ENCODE measurements at regions of chr10 and their contacts with region 1.

Region 1: DNA sequence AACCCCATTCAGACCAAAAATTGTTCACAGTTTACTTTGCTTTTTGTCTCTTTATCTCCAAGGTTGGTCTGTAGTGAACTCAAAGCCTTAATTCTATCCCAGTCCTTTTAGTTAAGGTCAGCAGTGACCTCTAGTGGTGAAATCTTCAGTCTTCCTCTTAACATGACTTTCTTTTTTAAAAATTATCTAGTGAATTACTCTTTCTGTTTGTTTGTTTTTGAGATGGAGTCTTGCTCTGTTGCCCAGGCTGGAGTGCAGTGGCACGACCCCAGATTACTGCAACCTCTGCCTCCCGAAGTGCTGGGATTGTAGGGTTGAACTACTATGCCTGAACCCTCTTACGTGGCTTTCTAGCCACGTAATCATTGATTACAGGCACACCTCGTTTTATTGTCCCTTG is 25.0 kb downstream of the ZNF487 start:
- DNase-seq: peak in 7 of 9 donors; percentile 62 to 79 (median 70)
- ATAC-seq: peak; percentile 92
- H3K4me3 ChIP-seq: no peak overlapping the region
- H3K4me3 Mint-ChIP-seq: peak overlapping the region in 1 of 10 donors; percentile 20
- H3K27ac ChIP-seq: no peak overlapping the region
- H3K27ac Mint-ChIP-seq: peak overlapping the region in 6 of 9 donors; percentile 2 to 67 (median 40)
- H3K4me1 ChIP-seq: peaks cover 1 to 7% of the 10 kb centered on the region in 2 donors
- H3K4me1 Mint-ChIP-seq: peaks cover 4 to 22% (median 19%) of the 10 kb centered on the region in 7 donors
- H3K27me3 ChIP-seq: no peaks in the 10 kb centered on the region
- H3K27me3 Mint-ChIP-seq: no peaks in the 10 kb centered on the region

Region 2: GRCh38 chr10:43105102-43105785 is 356.7 kb before region 1 on chr10:
- CTCF ChIA-PET with region 1: no interaction called
- POLR2A ChIA-PET with region 1: no interaction called
- intact Hi-C with region 1: loop called in 1 of 2 experiments (anchors 2 kb)
- DNase-seq: peak; percentile 48 to 91 (median 75)
- ATAC-seq: peak; percentile 95
- H3K4me3 ChIP-seq: peak overlapping the region; percentile 60
- H3K4me3 Mint-ChIP-seq: peak overlapping the region; percentile 61 to 85 (median 76)
- H3K27ac ChIP-seq: no peak overlapping the region
- H3K27ac Mint-ChIP-seq: peak overlapping the region in 1 of 9 donors; percentile 49
- H3K4me1 ChIP-seq: peaks cover 0 to 8% of the 10 kb centered on the region in 2 donors
- H3K4me1 Mint-ChIP-seq: peaks cover 0 to 15% (median 7%) of the 10 kb centered on the region in 7 donors
- H3K27me3 ChIP-seq: no peaks in the 10 kb centered on the region
- H3K27me3 Mint-ChIP-seq: peaks cover 15 to 26% (median 26%) of the 10 kb centered on the region in 5 donors

Region 3: GRCh38 chr10:43265799-43266721 is 195.9 kb before region 1 on chr10:
- CTCF ChIA-PET with region 1: interaction called, 3 read pairs
- POLR2A ChIA-PET with region 1: no interaction called
- intact Hi-C with region 1: loop called (anchors 1 to 10 kb)
- DNase-seq: peak in 2 of 9 donors; percentile 21 to 31
- ATAC-seq: peak; percentile 56
- H3K4me3 ChIP-seq: peak overlapping the region; percentile 53
- H3K4me3 Mint-ChIP-seq: peak overlapping the region; percentile 65 to 84 (median 74)
- H3K27ac ChIP-seq: no peak overlapping the region
- H3K27ac Mint-ChIP-seq: peak overlapping the region in 1 of 9 donors; percentile 52
- H3K4me1 ChIP-seq: peaks cover 0 to 4% of the 10 kb centered on the region in 2 donors
- H3K4me1 Mint-ChIP-seq: peaks cover 0 to 12% (median 4%) of the 10 kb centered on the region in 7 donors
- H3K27me3 ChIP-seq: peaks cover 0 to 11% of the 10 kb centered on the region in 2 donors
- H3K27me3 Mint-ChIP-seq: peaks cover 46 to 59% (median 54%) of the 10 kb centered on the region in 5 donors

Region 4: GRCh38 chr10:43292755-43293676 is 168.9 kb before region 1 on chr10:
- CTCF ChIA-PET with region 1: interaction called, 6 read pairs
- POLR2A ChIA-PET with region 1: interaction called, 3 read pairs
- intact Hi-C with region 1: loop called (anchors 1 kb)
- DNase-seq: peak in 6 of 9 donors; percentile 22 to 51 (median 44)
- ATAC-seq: peak; percentile 72
- H3K4me3 ChIP-seq: no peak overlapping the region
- H3K4me3 Mint-ChIP-seq: peak overlapping the region; percentile 13 to 75 (median 55)
- H3K27ac ChIP-seq: no peak overlapping the region
- H3K27ac Mint-ChIP-seq: peak overlapping the region in 6 of 9 donors; percentile 65 to 84 (median 78)
- H3K4me1 ChIP-seq: peaks cover 31 to 35% of the 10 kb centered on the region in 2 donors
- H3K4me1 Mint-ChIP-seq: peaks cover 16 to 83% (median 34%) of the 10 kb centered on the region in 7 donors
- H3K27me3 ChIP-seq: no peaks in the 10 kb centered on the region
- H3K27me3 Mint-ChIP-seq: peaks cover 0 to 15% (median 6%) of the 10 kb centered on the region in 5 donors

Region 5: DNA sequence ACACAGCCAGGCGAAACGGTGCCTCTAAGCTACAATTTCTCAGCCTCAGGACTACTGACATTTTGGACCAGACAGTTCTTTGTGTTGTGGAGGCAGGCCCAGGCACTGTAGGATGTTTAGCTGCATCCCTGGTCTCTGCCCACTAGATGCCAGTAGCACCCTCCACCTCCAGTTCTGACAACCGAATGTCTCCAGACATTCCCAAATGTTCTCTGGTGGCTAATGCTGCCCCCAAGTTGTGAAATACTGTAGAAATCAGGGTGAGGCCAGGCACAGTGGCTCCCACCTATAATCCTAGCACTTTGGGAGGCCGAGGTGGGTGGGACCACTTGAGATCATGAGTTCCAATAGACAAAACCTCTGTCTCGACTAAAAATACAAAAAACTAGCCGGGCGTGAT is 71.2 kb before region 1 on chr10:
- CTCF ChIA-PET with region 1: interaction called, 6 read pairs
- POLR2A ChIA-PET with region 1: interaction called, 4 read pairs
- intact Hi-C with region 1: loop called (anchors 1 to 2 kb)
- DNase-seq: peak in 5 of 9 donors; percentile 17 to 36 (median 23)
- ATAC-seq: peak; percentile 67
- H3K4me3 ChIP-seq: no peak overlapping the region
- H3K4me3 Mint-ChIP-seq: peak overlapping the region in 1 of 10 donors; percentile 8
- H3K27ac ChIP-seq: peak overlapping the region; percentile 55
- H3K27ac Mint-ChIP-seq: peak overlapping the region in 8 of 9 donors; percentile 34 to 86 (median 69)
- H3K4me1 ChIP-seq: peaks cover 29 to 51% of the 10 kb centered on the region in 2 donors
- H3K4me1 Mint-ChIP-seq: peaks cover 46 to 87% (median 78%) of the 10 kb centered on the region in 7 donors
- H3K27me3 ChIP-seq: no peaks in the 10 kb centered on the region
- H3K27me3 Mint-ChIP-seq: no peaks in the 10 kb centered on the region

Measured in naive thymus-derived CD4-positive, alpha-beta T cell (primary cell).